ENCODE measurements at regions of chr22 and their contacts with region 1.

Region 1: DNA sequence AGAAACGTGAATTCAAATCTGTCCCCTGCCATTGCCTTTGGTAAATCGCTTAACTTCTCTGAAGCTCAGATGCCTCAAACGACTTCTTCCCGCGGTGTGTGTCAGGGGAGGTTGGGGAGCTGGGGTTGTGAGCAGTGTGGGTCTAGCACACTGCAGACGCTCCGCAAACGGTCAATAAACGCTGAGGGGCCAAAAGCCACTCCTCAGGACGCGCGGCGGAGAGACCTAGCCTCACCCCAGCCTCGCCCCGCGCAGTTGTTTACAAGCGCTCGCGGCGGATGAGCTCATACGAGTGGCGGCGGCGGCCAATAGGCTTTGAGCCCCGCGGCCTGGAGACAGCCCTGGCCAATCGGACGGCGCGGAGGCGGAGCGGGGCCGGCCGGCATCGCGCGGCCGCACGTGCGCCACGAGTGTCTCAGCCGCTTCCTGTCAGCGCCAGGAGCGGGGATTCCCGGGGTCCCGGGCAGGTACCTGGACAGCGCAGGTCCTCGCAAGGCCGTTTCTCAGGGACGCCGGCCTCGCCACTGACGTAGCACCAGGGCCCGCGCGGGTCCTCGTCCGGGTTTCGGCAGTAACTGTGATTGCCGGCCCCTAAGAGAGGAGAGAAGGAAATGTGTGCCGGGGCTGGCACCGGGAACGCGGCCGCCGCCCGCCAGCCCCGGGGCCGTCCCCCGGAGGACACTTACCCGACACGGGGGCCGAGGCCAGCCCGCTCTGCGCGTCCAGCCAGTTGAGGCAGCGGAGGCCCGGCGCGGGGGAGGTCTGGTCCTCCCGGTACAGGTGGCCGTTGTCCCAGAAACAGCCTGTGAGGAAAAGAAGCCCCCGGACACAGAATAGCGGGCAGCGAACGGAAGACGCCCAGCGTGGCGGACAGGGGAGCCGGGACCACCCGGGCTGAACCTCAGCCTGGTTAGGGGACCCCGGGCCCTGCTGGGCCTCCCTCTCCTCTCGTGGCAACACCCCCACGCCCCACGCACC is 1.5 kb downstream of the PIK3IP1 start:
- DNase-seq: peak; percentile 94
- H3K4me3 ChIP-seq: peak overlapping the region; percentile 72
- H3K27ac ChIP-seq: peak overlapping the region; percentile 88
- H3K4me1 ChIP-seq: peaks cover 67% of the 10 kb centered on the region
- CTCF ChIP-seq: no peak

Region 2: DNA sequence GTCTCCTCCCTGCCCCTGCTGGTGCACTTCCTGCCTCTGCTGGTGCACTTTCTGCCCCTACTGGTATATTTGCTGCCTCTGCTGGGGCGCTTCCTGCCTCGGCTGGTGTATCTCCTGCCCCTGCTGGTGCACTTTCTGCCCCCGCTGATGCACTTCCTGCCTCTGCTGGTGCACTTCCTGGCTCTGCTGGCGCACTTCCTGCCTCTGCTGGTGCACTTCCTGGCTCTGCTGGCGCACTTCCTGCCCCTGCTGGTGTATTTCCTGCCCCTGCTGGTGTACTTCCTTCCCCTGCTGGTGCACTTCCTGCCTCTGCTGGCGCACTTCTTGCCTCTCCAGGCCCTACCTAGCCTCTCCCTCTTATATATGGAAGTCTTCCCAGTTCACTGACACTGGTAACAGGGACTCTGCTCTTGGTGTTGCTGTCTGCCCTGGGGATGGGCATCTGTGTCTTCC is 855.1 kb before region 1 on chr22:
- CTCF ChIA-PET with region 1: no interaction called
- POLR2A ChIA-PET with region 1: no interaction called
- intact Hi-C with region 1: loop called (anchors 5 kb)
- DNase-seq: peak; percentile 90
- H3K4me3 ChIP-seq: peak overlapping the region; percentile 63
- H3K27ac ChIP-seq: peak overlapping the region; percentile 67
- H3K4me1 ChIP-seq: peaks cover 25% of the 10 kb centered on the region
- CTCF ChIP-seq: peak; percentile 67

Region 3: GRCh38 chr22:31211862-31212730 is 78.7 kb before region 1 on chr22 and contains the start of gene LIMK2:
- CTCF ChIA-PET with region 1: no interaction called
- POLR2A ChIA-PET with region 1: interaction called, 10 read pairs
- intact Hi-C with region 1: loop called (anchors 5 kb)
- DNase-seq: peak; percentile 96
- H3K4me3 ChIP-seq: peak within 1 kb of the TSS; percentile 97
- H3K27ac ChIP-seq: no peak within 1 kb of the TSS
- H3K4me1 ChIP-seq: peaks cover 16% of the 10 kb centered on the region
- CTCF ChIP-seq: peak; percentile 90
- total RNA-seq, gene LIMK2: 16.2 and 24.8 TPM in 2 replicates

Region 4: DNA sequence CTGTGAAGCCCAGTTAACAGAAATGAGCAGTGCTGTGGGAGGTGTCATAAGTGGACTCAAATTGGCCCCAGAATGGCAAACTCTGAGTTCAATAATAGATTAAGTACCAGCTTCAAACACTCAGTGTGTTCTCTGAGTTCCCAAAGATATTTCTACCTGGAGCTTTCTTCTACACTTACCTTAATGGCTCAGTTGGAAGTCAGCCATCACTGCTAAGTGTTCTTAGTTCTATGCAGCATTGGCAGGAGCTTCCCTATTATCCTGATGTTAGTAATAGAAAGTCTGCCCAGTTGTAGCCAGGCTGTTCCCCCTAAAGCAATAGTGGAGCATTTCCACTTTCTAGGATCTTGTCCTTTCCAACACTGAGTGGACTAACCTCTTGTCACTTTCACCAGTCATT is 11.2 kb after region 1 on chr22:
- CTCF ChIA-PET with region 1: no interaction called
- POLR2A ChIA-PET with region 1: interaction called, 18 read pairs
- intact Hi-C with region 1: no loop called
- DNase-seq: no peak
- H3K4me3 ChIP-seq: no peak overlapping the region
- H3K27ac ChIP-seq: no peak overlapping the region
- H3K4me1 ChIP-seq: peaks cover 11% of the 10 kb centered on the region
- CTCF ChIP-seq: no peak

Region 5: DNA sequence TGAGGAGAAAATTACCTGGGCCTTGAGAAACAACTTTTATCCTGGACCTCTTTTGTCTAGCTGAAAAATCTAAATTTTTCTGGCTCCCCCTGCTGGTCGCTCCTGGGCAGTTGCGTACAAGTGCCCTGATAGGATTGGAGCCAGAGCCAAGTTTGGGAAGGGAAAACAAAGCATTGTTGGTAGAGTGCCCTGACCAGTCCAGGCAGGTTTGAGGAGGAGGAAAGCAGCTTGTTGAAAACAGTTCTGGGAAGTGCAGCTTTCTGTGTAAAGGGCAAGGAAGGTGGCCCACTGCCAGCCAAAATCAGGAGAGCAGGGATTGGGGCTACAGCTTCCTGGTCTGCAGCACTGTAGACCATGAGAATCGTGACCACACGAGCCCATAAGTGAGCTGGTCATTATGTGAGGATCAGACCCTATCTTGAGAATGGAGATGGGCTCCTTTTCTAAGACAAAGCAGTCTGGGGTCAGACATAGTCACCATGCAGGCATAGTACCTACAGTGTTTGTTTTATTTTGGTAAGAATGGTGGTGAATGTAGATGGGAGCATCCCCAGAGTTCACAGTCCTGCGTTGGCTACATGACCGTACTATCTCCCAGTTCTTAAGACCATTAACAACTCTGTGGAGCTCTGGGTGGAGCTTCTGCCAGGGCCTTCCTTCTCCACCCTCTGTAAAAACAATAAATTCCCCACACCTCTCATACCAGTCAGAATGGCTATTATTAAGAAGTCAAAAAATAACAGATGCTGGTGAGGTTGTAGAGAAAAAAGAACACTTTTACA is 22.8 kb after region 1 on chr22:
- CTCF ChIA-PET with region 1: interaction called, 4 read pairs
- POLR2A ChIA-PET with region 1: interaction called, 5 read pairs
- intact Hi-C with region 1: loop called (anchors 1 kb)
- DNase-seq: peak; percentile 63
- H3K4me3 ChIP-seq: no peak overlapping the region
- H3K27ac ChIP-seq: no peak overlapping the region
- H3K4me1 ChIP-seq: peaks cover 3% of the 10 kb centered on the region
- CTCF ChIP-seq: peak; percentile 93

Region 6: DNA sequence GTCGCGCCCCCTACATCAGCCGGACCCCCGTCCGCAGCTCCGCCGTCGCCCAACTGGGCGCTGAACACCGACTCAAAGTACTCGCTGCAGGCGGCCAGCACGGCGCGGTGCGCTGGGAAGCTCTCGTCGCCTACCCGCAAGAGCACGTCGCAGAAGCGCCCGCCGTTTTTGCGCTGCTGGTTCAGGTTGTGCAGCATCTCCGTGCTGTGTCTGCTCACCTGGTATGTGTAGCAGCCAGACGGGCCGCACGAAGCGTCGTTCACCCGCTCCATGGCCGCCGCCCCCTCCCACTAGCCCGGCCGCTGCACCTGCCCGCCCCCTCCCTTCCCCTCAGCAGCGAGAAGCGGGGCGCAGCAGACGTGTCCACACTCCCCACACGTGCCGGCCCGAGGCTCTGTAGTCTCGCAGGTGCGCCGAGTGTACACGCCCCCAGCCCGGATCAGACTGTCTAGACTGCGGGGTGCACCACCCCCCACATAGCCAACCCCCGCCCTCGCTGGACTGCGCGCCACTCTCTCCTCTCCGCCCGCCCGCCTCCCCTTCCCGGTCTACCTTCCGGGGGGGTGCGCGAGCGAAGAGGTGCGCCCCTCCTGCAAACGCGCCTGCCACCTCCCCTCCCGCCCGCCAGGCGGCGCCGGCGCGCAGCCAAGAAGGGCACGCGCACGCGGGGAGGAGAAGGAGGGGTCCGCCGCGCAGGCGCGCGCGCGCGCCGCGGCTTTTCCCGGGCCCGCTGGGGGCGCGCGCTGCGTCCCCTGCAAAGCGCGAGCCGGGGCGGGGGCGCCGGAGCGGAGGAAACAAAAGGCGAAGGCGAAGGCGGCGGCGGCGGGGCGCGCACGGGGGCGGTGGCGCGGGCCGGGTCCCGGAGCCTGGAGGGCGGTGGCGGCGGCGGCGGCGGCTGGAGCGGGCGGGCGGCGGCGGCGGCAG is 54.8 kb after region 1 on chr22:
- CTCF ChIA-PET with region 1: no interaction called
- POLR2A ChIA-PET with region 1: interaction called, 4 read pairs
- intact Hi-C with region 1: loop called (anchors 1 kb)
- DNase-seq: peak; percentile 96
- H3K4me3 ChIP-seq: peak overlapping the region; percentile 84
- H3K27ac ChIP-seq: peak overlapping the region; percentile 76
- H3K4me1 ChIP-seq: peaks cover 30% of the 10 kb centered on the region
- CTCF ChIP-seq: peak; percentile 80

Region 7: DNA sequence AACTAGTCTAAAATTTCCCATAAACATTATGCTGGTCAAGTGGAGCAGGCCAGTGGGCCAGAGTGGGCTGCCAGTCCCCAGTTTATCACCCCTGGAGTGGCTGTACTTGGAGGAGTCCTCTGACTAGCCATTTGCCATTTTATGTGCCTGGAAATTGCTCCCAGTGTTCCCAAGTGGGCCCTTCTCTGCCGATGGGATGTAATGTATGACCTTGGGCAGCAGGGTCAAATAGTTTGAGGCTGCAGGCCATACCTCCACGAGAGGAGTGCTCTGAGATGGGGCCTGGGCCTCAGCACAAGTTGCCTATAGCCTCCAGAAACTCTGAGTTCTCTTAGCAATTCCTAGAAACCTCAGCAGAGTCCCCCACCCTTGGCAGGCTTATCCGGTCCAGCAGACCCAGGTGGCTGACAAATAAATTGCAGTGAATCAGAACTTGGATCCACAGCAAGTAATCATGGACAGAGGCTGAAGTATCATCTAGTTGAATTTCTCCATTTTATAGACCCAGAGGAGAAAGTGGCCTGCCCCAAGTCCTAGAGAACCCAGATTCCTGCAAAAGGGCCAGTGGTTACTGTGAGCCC is 73.2 kb after region 1 on chr22:
- CTCF ChIA-PET with region 1: no interaction called
- POLR2A ChIA-PET with region 1: no interaction called
- intact Hi-C with region 1: no loop called
- DNase-seq: no peak
- H3K4me3 ChIP-seq: no peak overlapping the region
- H3K27ac ChIP-seq: no peak overlapping the region
- H3K4me1 ChIP-seq: no peaks in the 10 kb centered on the region
- CTCF ChIP-seq: no peak

Region 8: GRCh38 chr22:31489604-31490495 is 199.1 kb after region 1 on chr22 and contains the start of gene EIF4ENIF1:
- CTCF ChIA-PET with region 1: no interaction called
- POLR2A ChIA-PET with region 1: interaction called, 3 read pairs
- intact Hi-C with region 1: loop called (anchors 5 kb)
- DNase-seq: peak; percentile 87
- H3K4me3 ChIP-seq: peak within 1 kb of the TSS; percentile 79
- H3K27ac ChIP-seq: peak within 1 kb of the TSS; percentile 97
- H3K4me1 ChIP-seq: peaks cover 50% of the 10 kb centered on the region
- CTCF ChIP-seq: no peak
- total RNA-seq, gene EIF4ENIF1: 12.5 and 18.1 TPM in 2 replicates